GM12878 (cell line): ENCODE measurements at regions of chr2 and their contacts with region 1.

Region 1: GRCh38 chr2:179226203-179226960 is 38.2 kb downstream of the SESTD1 start:
- DNase-seq: no peak
- ATAC-seq: no peak
- H3K4me3 ChIP-seq: no peak overlapping the region
- H3K27ac ChIP-seq: no peak overlapping the region
- H3K4me1 ChIP-seq: no peaks in the 10 kb centered on the region
- H3K27me3 ChIP-seq: no peaks in the 10 kb centered on the region
- CTCF ChIP-seq: no peak
- EP300 ChIP-seq: no peak
- POLR2A ChIP-seq: no peak
- RAD21 ChIP-seq: no peak

Region 2: GRCh38 chr2:177651833-177652232 is 1574.5 kb before region 1 on chr2:
- CTCF ChIA-PET with region 1: no interaction called
- POLR2A ChIA-PET with region 1: no interaction called
- RAD21 ChIA-PET with region 1: no interaction called
- SMC1A ChIA-PET with region 1: no interaction called
- in situ Hi-C with region 1: no loop called
- intact Hi-C with region 1: no loop called
- DNase-seq: no peak
- ATAC-seq: no peak
- H3K4me3 ChIP-seq: no peak overlapping the region
- H3K27ac ChIP-seq: no peak overlapping the region
- H3K4me1 ChIP-seq: no peaks in the 10 kb centered on the region
- H3K27me3 ChIP-seq: peaks cover 2 to 6% of the 10 kb centered on the region in 2 experiments; a peak in 3 of 4 replicates
- CTCF ChIP-seq: no peak
- EP300 ChIP-seq: no peak
- POLR2A ChIP-seq: no peak
- RAD21 ChIP-seq: no peak

Region 3: DNA sequence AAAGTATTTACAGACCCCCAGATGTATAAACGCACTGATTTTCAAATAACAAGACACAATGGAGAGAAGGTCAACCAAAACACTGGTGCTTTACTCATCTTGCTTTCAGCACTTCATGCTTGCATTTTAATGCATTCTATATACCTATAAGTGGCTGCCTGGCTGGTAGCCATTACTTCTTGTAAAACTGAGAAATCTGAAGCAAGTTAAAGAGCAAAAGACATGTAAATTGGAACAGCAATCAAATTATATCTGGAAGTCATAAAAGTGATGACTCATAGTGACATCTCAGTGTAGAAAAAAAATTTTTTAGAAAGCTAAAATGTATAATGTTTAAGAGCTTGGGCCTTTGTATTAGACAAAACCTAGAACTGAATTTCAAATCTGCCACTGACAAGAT is 282.6 kb before region 1 on chr2:
- CTCF ChIA-PET with region 1: no interaction called
- POLR2A ChIA-PET with region 1: no interaction called
- RAD21 ChIA-PET with region 1: no interaction called
- SMC1A ChIA-PET with region 1: no interaction called
- in situ Hi-C with region 1: no loop called
- intact Hi-C with region 1: no loop called
- DNase-seq: no peak
- ATAC-seq: no peak
- H3K4me3 ChIP-seq: no peak overlapping the region
- H3K27ac ChIP-seq: no peak overlapping the region
- H3K4me1 ChIP-seq: no peaks in the 10 kb centered on the region
- H3K27me3 ChIP-seq: no peaks in the 10 kb centered on the region
- CTCF ChIP-seq: no peak
- EP300 ChIP-seq: no peak
- POLR2A ChIP-seq: no peak
- RAD21 ChIP-seq: no peak

Region 4: GRCh38 chr2:179049546-179050311 is 176.7 kb before region 1 on chr2 and contains the start of gene CCDC141:
- CTCF ChIA-PET with region 1: no interaction called
- POLR2A ChIA-PET with region 1: no interaction called
- RAD21 ChIA-PET with region 1: no interaction called
- SMC1A ChIA-PET with region 1: no interaction called
- in situ Hi-C with region 1: no loop called
- intact Hi-C with region 1: no loop called
- DNase-seq: peak; percentile 37
- ATAC-seq: peak; percentile 77
- H3K4me3 ChIP-seq: peak within 1 kb of the TSS; percentile 68
- H3K27ac ChIP-seq: peak within 1 kb of the TSS; percentile 69
- H3K4me1 ChIP-seq: peaks cover 31% of the 10 kb centered on the region
- H3K27me3 ChIP-seq: no peaks in the 10 kb centered on the region
- CTCF ChIP-seq: no peak
- EP300 ChIP-seq: 0 out of 4 replicates have a peak, but pooled peaks of 1 of the 2 experiments have one; percentile 15
- POLR2A ChIP-seq: peak; percentile 35; the same call in 1 of the 2 replicates
- RAD21 ChIP-seq: no peak
- polyA plus RNA-seq, gene CCDC141: 0.84 to 2.1 TPM

Region 5: GRCh38 chr2:179193759-179194394 is 32.5 kb before region 1 on chr2:
- CTCF ChIA-PET with region 1: no interaction called
- POLR2A ChIA-PET with region 1: no interaction called
- RAD21 ChIA-PET with region 1: no interaction called
- SMC1A ChIA-PET with region 1: no interaction called
- in situ Hi-C with region 1: no loop called
- intact Hi-C with region 1: no loop called
- DNase-seq: no peak
- ATAC-seq: no peak
- H3K4me3 ChIP-seq: no peak overlapping the region
- H3K27ac ChIP-seq: no peak overlapping the region
- H3K4me1 ChIP-seq: no peaks in the 10 kb centered on the region
- H3K27me3 ChIP-seq: no peaks in the 10 kb centered on the region
- CTCF ChIP-seq: no peak
- EP300 ChIP-seq: no peak
- POLR2A ChIP-seq: no peak
- RAD21 ChIP-seq: no peak

Region 6: GRCh38 chr2:179239195-179239594 is 12.8 kb after region 1 on chr2:
- CTCF ChIA-PET with region 1: interaction called, 4 read pairs
- POLR2A ChIA-PET with region 1: interaction called, 3 read pairs
- RAD21 ChIA-PET with region 1: no interaction called
- SMC1A ChIA-PET with region 1: interaction called, 13 read pairs
- in situ Hi-C with region 1: no loop called
- intact Hi-C with region 1: no loop called
- DNase-seq: no peak
- ATAC-seq: peak; percentile 83
- H3K4me3 ChIP-seq: no peak overlapping the region
- H3K27ac ChIP-seq: no peak overlapping the region
- H3K4me1 ChIP-seq: no peaks in the 10 kb centered on the region
- H3K27me3 ChIP-seq: no peaks in the 10 kb centered on the region
- CTCF ChIP-seq: no peak
- EP300 ChIP-seq: no peak
- POLR2A ChIP-seq: no peak
- RAD21 ChIP-seq: no peak